ENCODE measurements at regions of chr11 and their contacts with region 1.

Region 1: GRCh38 chr11:92340839-92341238 is 116.2 kb downstream of the FAT3 start:
- DNase-seq: no peak
- ATAC-seq: peak; percentile 85
- H3K4me3 ChIP-seq: no peak overlapping the region
- H3K27ac ChIP-seq: no peak overlapping the region
- H3K4me1 ChIP-seq: no peaks in the 10 kb centered on the region
- H3K27me3 ChIP-seq: no peaks in the 10 kb centered on the region
- CTCF ChIP-seq: peak; percentile 38 to 57 (median 45); a peak in 5 of 6 replicates
- EP300 ChIP-seq: no peak
- POLR2A ChIP-seq: no peak
- RAD21 ChIP-seq: peak; percentile 31; the same call in 1 of the 2 replicates

Region 2: GRCh38 chr11:92269021-92269420 is 71.8 kb before region 1 on chr11:
- CTCF ChIA-PET with region 1: no interaction called
- POLR2A ChIA-PET with region 1: no interaction called
- RAD21 ChIA-PET with region 1: no interaction called
- SMC1A ChIA-PET with region 1: no interaction called
- in situ Hi-C with region 1: no loop called
- intact Hi-C with region 1: no loop called
- DNase-seq: no peak
- ATAC-seq: no peak
- H3K4me3 ChIP-seq: no peak overlapping the region
- H3K27ac ChIP-seq: no peak overlapping the region
- H3K4me1 ChIP-seq: no peaks in the 10 kb centered on the region
- H3K27me3 ChIP-seq: no peaks in the 10 kb centered on the region
- CTCF ChIP-seq: no peak
- EP300 ChIP-seq: no peak
- POLR2A ChIP-seq: no peak
- RAD21 ChIP-seq: no peak

Region 3: DNA sequence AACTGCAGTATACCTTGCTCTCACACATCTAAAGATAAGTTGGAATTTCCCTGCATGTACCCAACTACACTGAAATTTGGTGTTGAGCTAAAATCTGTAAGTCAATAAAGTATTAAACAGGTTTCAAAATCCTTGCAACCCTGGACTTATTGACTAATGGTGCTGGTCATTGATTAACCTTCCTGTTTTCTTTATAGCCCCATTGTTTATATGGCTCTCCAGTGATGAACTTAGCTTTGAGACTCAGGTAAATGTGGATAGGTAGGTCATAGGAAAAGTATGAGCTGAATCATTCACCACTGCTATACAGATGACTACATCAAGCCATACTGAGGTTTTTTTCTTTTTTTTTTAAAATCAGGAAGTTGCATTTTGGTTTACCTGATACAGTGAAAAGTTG is 16.5 kb after region 1 on chr11:
- CTCF ChIA-PET with region 1: interaction called, 12 read pairs
- POLR2A ChIA-PET with region 1: no interaction called
- RAD21 ChIA-PET with region 1: no interaction called
- SMC1A ChIA-PET with region 1: interaction called, 4 read pairs
- in situ Hi-C with region 1: no loop called
- intact Hi-C with region 1: no loop called
- DNase-seq: no peak
- ATAC-seq: no peak
- H3K4me3 ChIP-seq: no peak overlapping the region
- H3K27ac ChIP-seq: no peak overlapping the region
- H3K4me1 ChIP-seq: no peaks in the 10 kb centered on the region
- H3K27me3 ChIP-seq: no peaks in the 10 kb centered on the region
- CTCF ChIP-seq: no peak
- EP300 ChIP-seq: no peak
- POLR2A ChIP-seq: no peak
- RAD21 ChIP-seq: no peak

Region 4: DNA sequence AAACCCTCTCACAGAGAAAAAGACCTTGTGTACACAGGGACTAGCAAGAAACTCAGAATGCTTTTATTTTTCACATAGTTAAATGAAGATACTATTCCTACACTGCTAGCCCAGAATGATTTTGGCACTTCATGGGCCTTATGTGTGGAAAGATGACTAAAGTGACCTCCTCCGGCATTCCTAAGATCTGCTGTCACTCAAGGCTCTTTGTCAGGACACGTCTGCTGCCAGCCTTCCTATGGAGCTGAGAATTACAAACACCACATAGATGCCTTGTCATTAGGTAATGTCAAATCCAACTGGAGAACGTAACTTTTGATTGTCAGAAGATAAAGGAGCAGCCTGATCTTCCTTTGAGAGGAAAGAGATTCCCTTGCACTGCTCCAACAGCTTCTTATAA is 132.9 kb after region 1 on chr11:
- CTCF ChIA-PET with region 1: no interaction called
- POLR2A ChIA-PET with region 1: no interaction called
- RAD21 ChIA-PET with region 1: no interaction called
- SMC1A ChIA-PET with region 1: no interaction called
- in situ Hi-C with region 1: no loop called
- intact Hi-C with region 1: no loop called
- DNase-seq: no peak
- ATAC-seq: no peak
- H3K4me3 ChIP-seq: no peak overlapping the region
- H3K27ac ChIP-seq: no peak overlapping the region
- H3K4me1 ChIP-seq: no peaks in the 10 kb centered on the region
- H3K27me3 ChIP-seq: no peaks in the 10 kb centered on the region
- CTCF ChIP-seq: no peak
- EP300 ChIP-seq: no peak
- POLR2A ChIP-seq: no peak
- RAD21 ChIP-seq: no peak

Region 5: GRCh38 chr11:92540096-92540495 is 199.3 kb after region 1 on chr11:
- CTCF ChIA-PET with region 1: no interaction called
- POLR2A ChIA-PET with region 1: no interaction called
- RAD21 ChIA-PET with region 1: no interaction called
- SMC1A ChIA-PET with region 1: no interaction called
- in situ Hi-C with region 1: no loop called
- intact Hi-C with region 1: loop called (anchors 5 kb)
- DNase-seq: no peak
- ATAC-seq: no peak
- H3K4me3 ChIP-seq: no peak overlapping the region
- H3K27ac ChIP-seq: no peak overlapping the region
- H3K4me1 ChIP-seq: no peaks in the 10 kb centered on the region
- H3K27me3 ChIP-seq: no peaks in the 10 kb centered on the region; a peak in 1 of 4 replicates
- CTCF ChIP-seq: no peak
- EP300 ChIP-seq: no peak
- POLR2A ChIP-seq: no peak
- RAD21 ChIP-seq: no peak

Region 6: DNA sequence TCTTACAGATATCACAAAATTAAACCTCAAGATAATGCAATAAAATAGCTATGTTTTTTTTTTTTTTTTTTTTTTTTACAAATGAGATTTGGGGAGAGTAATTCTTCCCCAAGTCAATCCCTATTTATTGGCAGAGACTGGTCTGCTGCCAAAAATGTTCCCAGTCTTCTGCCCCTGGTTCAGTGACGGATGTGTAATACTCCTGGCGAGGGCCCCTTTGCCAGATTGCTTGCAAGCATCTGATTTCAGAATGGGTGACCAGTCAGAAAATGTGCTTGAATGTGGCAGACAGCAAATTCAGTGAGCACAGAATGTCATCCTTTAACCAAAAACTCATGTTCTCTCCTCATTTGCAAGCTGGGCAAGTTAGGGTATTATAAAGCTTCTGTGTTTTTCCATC is 264.8 kb after region 1 on chr11:
- CTCF ChIA-PET with region 1: no interaction called
- POLR2A ChIA-PET with region 1: no interaction called
- RAD21 ChIA-PET with region 1: no interaction called
- SMC1A ChIA-PET with region 1: no interaction called
- in situ Hi-C with region 1: no loop called
- intact Hi-C with region 1: loop called (anchors 10 kb)
- DNase-seq: no peak
- ATAC-seq: no peak
- H3K4me3 ChIP-seq: no peak overlapping the region
- H3K27ac ChIP-seq: no peak overlapping the region
- H3K4me1 ChIP-seq: no peaks in the 10 kb centered on the region
- H3K27me3 ChIP-seq: no peaks in the 10 kb centered on the region
- CTCF ChIP-seq: no peak
- EP300 ChIP-seq: no peak
- POLR2A ChIP-seq: no peak
- RAD21 ChIP-seq: no peak

Region 7: GRCh38 chr11:92886243-92886905 is 545.5 kb after region 1 on chr11:
- CTCF ChIA-PET with region 1: interaction called, 8 read pairs
- POLR2A ChIA-PET with region 1: no interaction called
- RAD21 ChIA-PET with region 1: no interaction called
- SMC1A ChIA-PET with region 1: interaction called, 5 read pairs
- in situ Hi-C with region 1: no loop called
- intact Hi-C with region 1: loop called (anchors 5 kb)
- DNase-seq: peak; percentile 3
- ATAC-seq: peak; percentile 91
- H3K4me3 ChIP-seq: no peak overlapping the region
- H3K27ac ChIP-seq: no peak overlapping the region
- H3K4me1 ChIP-seq: no peaks in the 10 kb centered on the region
- H3K27me3 ChIP-seq: peaks cover 0 to 2% of the 10 kb centered on the region in 2 experiments; a peak in 2 of 4 replicates
- CTCF ChIP-seq: peak; percentile 49 to 77 (median 66); a peak in 5 of 6 replicates
- EP300 ChIP-seq: no peak
- POLR2A ChIP-seq: no peak
- RAD21 ChIP-seq: peak; percentile 90

Measured in GM12878 (cell line).